ENCODE measurements at regions of chr2 and their contacts with region 1.

Region 1: DNA sequence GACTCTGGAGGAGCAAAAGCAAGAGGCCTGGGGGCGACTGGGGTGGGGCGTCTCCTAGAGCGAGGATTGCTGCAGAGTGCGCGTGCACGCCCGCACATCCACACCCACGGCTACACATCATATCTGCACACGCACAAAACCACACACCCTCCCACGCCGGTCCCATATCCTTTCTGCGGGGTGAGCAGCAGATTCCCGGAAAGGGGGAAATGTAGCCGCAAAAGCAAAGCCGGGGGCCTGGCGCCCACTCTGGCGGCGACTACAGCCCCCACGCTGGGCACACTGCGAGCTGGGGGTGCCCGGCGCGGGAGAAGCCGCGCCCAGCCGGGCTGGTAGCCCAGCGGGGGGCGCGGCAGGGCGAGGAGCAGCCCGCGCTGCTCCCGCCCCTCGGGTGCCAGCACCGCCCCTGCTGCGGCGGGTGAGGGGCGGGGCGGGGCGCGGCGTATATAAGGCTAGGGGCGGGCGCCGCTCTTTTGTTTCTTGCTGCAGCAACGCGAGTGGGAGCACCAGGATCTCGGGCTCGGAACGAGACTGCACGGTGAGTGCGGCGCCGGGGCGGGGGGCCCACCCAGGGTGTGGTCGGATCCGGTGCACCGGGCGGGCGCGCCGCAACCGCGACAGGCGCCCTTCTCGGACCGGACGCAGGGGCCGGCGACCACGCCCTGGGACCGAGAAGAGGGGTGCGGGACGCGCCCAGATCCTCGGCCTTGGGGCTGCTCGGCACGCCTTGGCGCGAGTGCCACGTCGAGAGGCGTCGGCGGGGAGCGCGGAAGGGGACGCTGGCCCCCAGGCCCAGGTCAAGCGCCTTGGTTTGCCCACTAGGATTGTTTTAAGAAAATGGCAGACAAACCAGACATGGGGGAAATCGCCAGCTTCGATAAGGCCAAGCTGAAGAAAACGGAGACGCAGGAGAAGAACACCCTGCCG is at the start of gene TMSB10:
- DNase-seq: peak; percentile 91
- ATAC-seq: peak; percentile 66
- H3K4me3 Mint-ChIP-seq: peak within 1 kb of the TSS; percentile 93
- H3K27ac Mint-ChIP-seq: peak within 1 kb of the TSS; percentile 95
- H3K4me1 Mint-ChIP-seq: peaks cover 75% of the 10 kb centered on the region
- H3K27me3 Mint-ChIP-seq: peaks cover 2% of the 10 kb centered on the region
- total RNA-seq, gene TMSB10: 4,520 to 4,885 TPM

Region 2: GRCh38 chr2:84776011-84776410 is 129.4 kb before region 1 on chr2:
- CTCF ChIA-PET with region 1: no interaction called
- POLR2A ChIA-PET with region 1: no interaction called
- DNase-seq: no peak
- ATAC-seq: no peak
- H3K4me3 Mint-ChIP-seq: no peak overlapping the region
- H3K27ac Mint-ChIP-seq: no peak overlapping the region
- H3K4me1 Mint-ChIP-seq: peaks cover 25% of the 10 kb centered on the region
- H3K27me3 Mint-ChIP-seq: no peaks in the 10 kb centered on the region

Region 3: GRCh38 chr2:84870306-84870705 is 35.1 kb before region 1 on chr2:
- CTCF ChIA-PET with region 1: no interaction called
- POLR2A ChIA-PET with region 1: interaction called, 10 read pairs
- DNase-seq: peak; percentile 20
- ATAC-seq: no peak
- H3K4me3 Mint-ChIP-seq: no peak overlapping the region
- H3K27ac Mint-ChIP-seq: peak overlapping the region; percentile 39
- H3K4me1 Mint-ChIP-seq: peaks cover 81% of the 10 kb centered on the region
- H3K27me3 Mint-ChIP-seq: no peaks in the 10 kb centered on the region

Region 4: DNA sequence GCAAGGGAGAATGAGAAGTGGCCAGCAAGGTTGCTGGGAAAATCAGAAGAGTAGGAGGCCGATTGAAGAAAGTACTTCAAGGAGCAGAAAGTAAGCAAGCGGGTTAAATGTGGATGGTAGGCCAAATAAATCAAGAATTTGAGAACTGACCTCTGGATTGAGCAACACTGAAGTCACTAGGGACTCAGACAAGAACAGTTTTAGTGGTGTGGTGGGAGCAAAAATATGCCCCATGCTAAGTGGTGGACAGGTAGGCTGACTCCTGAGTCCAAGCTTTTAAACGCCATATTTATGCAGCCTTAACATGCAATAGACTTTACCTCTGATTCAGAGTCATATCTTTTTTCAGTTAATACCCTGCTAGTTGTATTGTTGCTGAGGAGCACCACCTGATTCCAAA is 29.1 kb before region 1 on chr2:
- CTCF ChIA-PET with region 1: interaction called, 58 read pairs
- POLR2A ChIA-PET with region 1: interaction called, 65 read pairs
- DNase-seq: no peak
- ATAC-seq: no peak
- H3K4me3 Mint-ChIP-seq: no peak overlapping the region
- H3K27ac Mint-ChIP-seq: peak overlapping the region; percentile 18
- H3K4me1 Mint-ChIP-seq: peaks cover 71% of the 10 kb centered on the region
- H3K27me3 Mint-ChIP-seq: no peaks in the 10 kb centered on the region

Region 5: DNA sequence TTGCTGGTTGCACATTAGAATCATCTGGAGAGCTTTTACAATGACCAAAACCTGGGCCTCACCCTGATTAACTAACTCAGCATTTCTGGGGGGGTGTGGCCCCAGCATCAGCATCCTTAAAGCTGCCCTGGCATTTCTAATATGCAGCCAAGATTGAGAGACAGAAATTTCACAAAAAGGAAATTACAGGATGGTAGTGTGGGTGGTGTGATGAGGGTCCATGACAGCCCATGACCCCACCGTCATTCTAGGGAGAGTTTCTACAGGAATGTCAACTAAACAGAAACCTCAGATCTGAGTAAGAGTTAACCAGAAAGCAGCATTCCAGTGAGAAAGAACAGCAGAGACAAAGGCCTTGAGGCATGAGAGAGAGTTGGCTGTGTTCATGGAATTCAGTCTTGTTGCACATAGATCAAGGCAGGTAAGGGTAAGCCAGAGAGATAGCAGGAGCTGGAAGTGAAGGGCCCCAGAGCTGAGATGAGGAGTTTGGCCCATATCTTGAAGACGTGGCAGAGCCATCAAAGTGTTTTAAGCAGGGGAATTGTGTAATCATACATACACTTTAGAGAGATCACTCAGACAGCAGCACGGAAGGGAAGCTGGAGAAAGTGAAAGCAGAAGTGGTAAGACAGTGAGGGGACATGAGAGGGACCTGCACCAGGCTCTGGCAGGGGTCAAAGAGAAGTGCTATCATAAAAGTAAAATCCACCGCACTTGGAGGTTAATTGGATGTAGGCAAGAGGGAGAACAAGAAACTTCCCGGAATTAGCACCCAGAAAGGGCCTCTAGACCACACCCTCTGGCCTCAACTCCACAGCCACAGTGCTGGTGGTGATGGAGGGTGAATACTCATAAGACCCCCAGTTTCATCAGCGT is 16.8 kb before region 1 on chr2:
- CTCF ChIA-PET with region 1: interaction called, 41 read pairs
- POLR2A ChIA-PET with region 1: interaction called, 90 read pairs
- DNase-seq: peak; percentile 81
- ATAC-seq: peak; percentile 96
- H3K4me3 Mint-ChIP-seq: peak overlapping the region; percentile 70
- H3K27ac Mint-ChIP-seq: peak overlapping the region; percentile 92
- H3K4me1 Mint-ChIP-seq: peaks cover 70% of the 10 kb centered on the region
- H3K27me3 Mint-ChIP-seq: no peaks in the 10 kb centered on the region

Region 6: GRCh38 chr2:84894758-84895520 is 10.5 kb before region 1 on chr2:
- CTCF ChIA-PET with region 1: interaction called, 41 read pairs
- POLR2A ChIA-PET with region 1: interaction called, 90 read pairs
- DNase-seq: peak; percentile 46
- ATAC-seq: peak; percentile 65
- H3K4me3 Mint-ChIP-seq: peak overlapping the region; percentile 43
- H3K27ac Mint-ChIP-seq: peak overlapping the region; percentile 69
- H3K4me1 Mint-ChIP-seq: peaks cover 71% of the 10 kb centered on the region
- H3K27me3 Mint-ChIP-seq: no peaks in the 10 kb centered on the region

Region 7: DNA sequence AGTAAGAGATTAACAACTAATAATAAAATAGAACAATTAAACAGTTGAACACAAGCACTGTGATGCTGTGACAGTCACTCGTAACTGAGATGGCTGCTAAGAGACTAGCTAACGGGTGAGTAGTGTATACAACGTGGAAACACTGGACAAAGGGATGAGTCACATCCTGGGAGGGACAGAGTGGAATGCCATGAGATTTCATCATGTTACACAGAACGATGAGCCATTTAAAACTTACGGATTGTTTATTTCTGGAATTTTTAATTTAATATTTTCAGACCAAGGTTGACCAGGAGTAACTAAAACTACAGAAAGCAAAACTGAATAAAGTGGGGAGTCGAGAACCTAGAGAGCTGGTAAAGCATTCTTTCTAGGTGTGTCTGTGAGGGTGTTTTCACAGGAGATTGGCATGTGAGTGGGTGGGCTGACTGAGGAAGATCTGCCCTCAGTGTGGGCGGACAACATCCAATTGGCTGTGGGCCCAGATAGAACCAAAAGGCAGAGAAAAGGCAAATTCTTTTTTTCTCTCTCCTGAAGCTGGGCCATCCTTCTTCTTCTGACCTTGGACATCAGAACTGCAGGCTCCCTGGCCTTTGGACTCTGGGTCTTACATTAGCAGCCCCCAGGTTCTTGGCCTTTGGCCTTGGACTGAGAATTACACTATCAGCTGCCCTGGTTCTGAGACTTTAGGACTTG is 14.6 kb after region 1 on chr2:
- CTCF ChIA-PET with region 1: interaction called, 222 read pairs
- POLR2A ChIA-PET with region 1: interaction called, 61 read pairs
- DNase-seq: no peak
- ATAC-seq: peak; percentile 43
- H3K4me3 Mint-ChIP-seq: peak overlapping the region; percentile 4
- H3K27ac Mint-ChIP-seq: peak overlapping the region; percentile 65
- H3K4me1 Mint-ChIP-seq: peaks cover 50% of the 10 kb centered on the region
- H3K27me3 Mint-ChIP-seq: no peaks in the 10 kb centered on the region

Region 8: GRCh38 chr2:84939426-84940087 is 34.1 kb after region 1 on chr2:
- CTCF ChIA-PET with region 1: interaction called, 6 read pairs
- POLR2A ChIA-PET with region 1: interaction called, 35 read pairs
- DNase-seq: peak; percentile 93
- ATAC-seq: peak; percentile 89
- H3K4me3 Mint-ChIP-seq: peak overlapping the region; percentile 69
- H3K27ac Mint-ChIP-seq: peak overlapping the region; percentile 96
- H3K4me1 Mint-ChIP-seq: peaks cover 65% of the 10 kb centered on the region
- H3K27me3 Mint-ChIP-seq: no peaks in the 10 kb centered on the region